GM10248 (cell line): ENCODE measurements at regions of chr5 and their contacts with region 1.

Region 1: DNA sequence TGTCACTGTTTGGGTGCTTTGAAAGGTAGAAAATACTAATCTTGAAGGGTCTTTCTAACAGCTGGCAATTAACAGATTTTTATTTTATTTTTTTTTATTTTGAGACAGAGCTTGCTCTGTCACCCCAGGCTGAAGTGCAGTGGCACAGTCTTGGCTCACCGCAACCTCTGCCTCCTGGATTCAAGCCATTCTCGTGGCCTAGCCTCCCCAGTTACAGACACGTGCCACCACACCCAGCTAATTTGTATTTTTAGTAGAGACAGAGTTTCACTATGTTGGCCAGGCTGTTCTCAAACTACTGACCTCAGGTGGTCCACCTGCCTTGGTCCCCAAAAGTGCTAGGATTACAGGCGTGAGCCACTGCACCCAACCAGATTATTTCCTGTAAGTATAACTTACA is 12.8 kb upstream of the APC start:
- DNase-seq: no peak
- CTCF ChIP-seq: no peak

Region 2: DNA sequence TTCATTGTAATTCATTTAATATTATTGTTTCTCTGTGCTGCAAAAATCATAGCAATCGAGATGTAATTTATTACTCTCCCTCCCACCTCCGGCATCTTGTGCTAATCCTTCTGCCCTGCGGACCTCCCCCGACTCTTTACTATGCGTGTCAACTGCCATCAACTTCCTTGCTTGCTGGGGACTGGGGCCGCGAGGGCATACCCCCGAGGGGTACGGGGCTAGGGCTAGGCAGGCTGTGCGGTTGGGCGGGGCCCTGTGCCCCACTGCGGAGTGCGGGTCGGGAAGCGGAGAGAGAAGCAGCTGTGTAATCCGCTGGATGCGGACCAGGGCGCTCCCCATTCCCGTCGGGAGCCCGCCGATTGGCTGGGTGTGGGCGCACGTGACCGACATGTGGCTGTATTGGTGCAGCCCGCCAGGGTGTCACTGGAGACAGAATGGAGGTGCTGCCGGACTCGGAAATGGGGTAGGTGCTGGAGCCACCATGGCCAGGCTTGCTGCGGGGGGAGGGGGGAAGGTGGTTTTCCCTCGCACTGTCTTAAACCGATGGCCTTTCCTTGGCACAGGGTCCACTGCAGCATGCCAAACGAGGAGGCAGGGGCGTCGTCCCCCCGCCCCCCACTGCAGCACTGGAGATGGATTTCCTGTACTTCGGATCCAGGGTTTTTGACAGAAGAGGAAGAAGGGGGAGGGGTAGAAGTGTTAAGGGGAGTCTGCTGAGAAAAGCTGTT is 12.7 kb after region 1 on chr5 and contains the start of gene APC:
- CTCF ChIA-PET with region 1: interaction called, 13 read pairs
- POLR2A ChIA-PET with region 1: no interaction called
- DNase-seq: peak; percentile 89
- CTCF ChIP-seq: no peak